Right lobe of liver (tissue), 6 donors: ENCODE measurements at regions of chr20 and their contacts with region 1.

Region 1: GRCh38 chr20:35092524-35093266 is at the start of gene TRPC4AP:
- DNase-seq: peak; percentile 92 to 93 (median 92)
- ATAC-seq: peak; percentile 93 to 97 (median 96)
- H3K4me3 ChIP-seq: peak within 1 kb of the TSS; percentile 61 to 90 (median 84)
- H3K27ac ChIP-seq: peak within 1 kb of the TSS; percentile 79 to 91 (median 89)
- H3K4me1 ChIP-seq: peaks cover 0 to 16% (median 4%) of the 10 kb centered on the region in 4 donors
- H3K27me3 ChIP-seq: no peaks in the 10 kb centered on the region
- CTCF ChIP-seq: peak; percentile 95 to 99 (median 98)
- POLR2A ChIP-seq: peak; percentile 82
- total RNA-seq, gene TRPC4AP: 27.6 to 39.3 (median 34.6) TPM

Region 2: GRCh38 chr20:35146920-35147574 is 54.4 kb after region 1 on chr20 and contains the start of gene EDEM2:
- intact Hi-C with region 1: loop called in 1 of 2 experiments (anchors 10 kb)
- DNase-seq: peak; percentile 95 to 97 (median 96)
- ATAC-seq: peak; percentile 88 to 91 (median 90)
- H3K4me3 ChIP-seq: peak within 1 kb of the TSS; percentile 63 to 73 (median 71)
- H3K27ac ChIP-seq: peak within 1 kb of the TSS; percentile 74 to 90 (median 86)
- H3K4me1 ChIP-seq: peaks cover 0 to 21% (median 4%) of the 10 kb centered on the region in 4 donors
- H3K27me3 ChIP-seq: no peaks in the 10 kb centered on the region
- CTCF ChIP-seq: peak in 1 of 4 donors; percentile 9
- POLR2A ChIP-seq: peak; percentile 66
- total RNA-seq, gene EDEM2: 20.1 to 28.0 (median 23.9) TPM